CD14-positive monocyte (primary cell): ENCODE measurements at regions of chr5 and their contacts with region 1.

Region 1: DNA sequence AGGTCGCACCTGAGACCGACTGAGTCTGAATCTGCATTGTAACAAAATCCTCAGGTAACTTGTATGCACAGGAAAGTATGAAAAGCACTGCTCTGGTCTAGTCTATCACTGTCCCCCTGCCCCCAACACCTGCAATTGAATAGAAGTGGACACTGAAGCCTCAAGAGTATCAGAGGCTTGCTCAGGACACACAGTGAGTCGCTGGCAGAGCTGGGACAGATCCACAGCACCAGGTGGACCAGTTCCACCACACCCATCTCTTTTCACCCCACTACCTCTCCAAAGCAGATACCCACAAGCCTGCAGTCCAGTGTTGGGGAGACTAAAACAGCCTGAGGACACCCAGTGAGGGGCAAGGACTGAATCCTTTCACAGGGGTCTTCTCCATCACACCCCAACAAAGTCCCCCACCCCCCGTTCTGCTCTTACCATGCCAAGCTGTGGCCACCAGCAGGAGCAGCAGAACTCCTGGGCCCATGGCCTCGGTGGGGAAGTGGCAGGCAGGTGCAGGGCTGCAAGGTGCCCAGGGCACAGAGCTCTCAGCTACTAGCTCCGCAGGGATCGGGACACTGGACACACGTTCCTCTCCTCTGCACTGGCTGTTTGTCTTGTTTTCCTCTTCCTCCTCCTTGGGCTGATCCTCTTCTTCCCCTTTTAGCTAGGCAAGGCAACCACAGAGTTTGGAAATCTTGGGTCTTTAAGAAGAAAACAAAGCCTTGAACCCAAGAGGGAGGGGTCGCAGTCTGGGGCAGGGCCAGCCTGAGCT is at the start of gene CSF1R:
- DNase-seq: peak; percentile 47 to 73 (median 68)
- H3K4me3 ChIP-seq: peak within 1 kb of the TSS; percentile 61 to 87 (median 81)
- H3K4me3 Mint-ChIP-seq: peak within 1 kb of the TSS; percentile 96 to 98
- H3K27ac ChIP-seq: peak within 1 kb of the TSS; percentile 51 to 83
- H3K27ac Mint-ChIP-seq: peak within 1 kb of the TSS; percentile 86 to 95 (median 92)
- H3K4me1 ChIP-seq: peaks cover 63 to 76% of the 10 kb centered on the region in 2 donors
- H3K4me1 Mint-ChIP-seq: peaks cover 79% of the 10 kb centered on the region
- H3K27me3 ChIP-seq: no peaks in the 10 kb centered on the region
- H3K27me3 Mint-ChIP-seq: peaks cover 0 to 5% (median 0%) of the 10 kb centered on the region in 3 donors
- CTCF ChIP-seq: no peak
- polyA plus RNA-seq, gene CSF1R: 180 to 332 (median 242) TPM

Region 2: DNA sequence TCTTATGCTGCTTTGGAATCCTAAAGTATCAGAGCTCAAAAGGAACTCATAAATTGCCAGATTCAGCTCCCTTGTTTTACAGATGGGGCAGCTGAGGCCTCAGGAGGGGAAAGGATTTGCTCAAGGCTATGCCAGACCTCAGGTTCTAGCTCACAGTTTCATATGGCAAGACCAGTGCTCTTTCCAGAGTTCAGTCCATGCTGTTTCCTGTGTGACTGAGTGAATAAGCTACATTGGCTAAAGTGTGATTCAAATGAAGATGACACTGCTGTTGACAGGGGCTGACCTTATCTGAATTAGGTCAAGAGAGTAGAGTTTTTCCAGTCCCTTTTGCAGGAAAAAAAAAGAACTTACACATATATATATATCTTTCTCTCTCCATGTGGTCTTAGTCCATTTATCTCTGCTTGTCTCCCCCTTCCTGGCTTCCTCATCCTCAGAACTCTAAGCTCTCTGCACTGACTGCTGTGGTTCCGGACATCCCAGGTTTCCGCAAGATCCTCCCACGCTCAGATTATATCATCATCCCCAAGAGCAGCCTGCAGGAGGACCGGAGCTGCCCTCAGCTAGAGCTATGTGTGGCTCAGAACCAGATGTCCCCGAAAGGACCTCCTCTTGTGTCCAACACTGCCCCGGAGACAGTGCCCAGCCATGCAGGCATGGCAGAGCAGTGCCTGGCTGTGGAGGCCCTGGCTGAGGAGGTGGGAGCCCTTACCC is 76.3 kb before region 1 on chr5:
- intact Hi-C with region 1: no loop called
- DNase-seq: no peak
- H3K4me3 ChIP-seq: no peak overlapping the region
- H3K4me3 Mint-ChIP-seq: no peak overlapping the region
- H3K27ac ChIP-seq: no peak overlapping the region
- H3K27ac Mint-ChIP-seq: peak overlapping the region in 2 of 7 donors; percentile 33 to 37
- H3K4me1 ChIP-seq: no peaks in the 10 kb centered on the region
- H3K4me1 Mint-ChIP-seq: no peaks in the 10 kb centered on the region
- H3K27me3 ChIP-seq: no peaks in the 10 kb centered on the region
- H3K27me3 Mint-ChIP-seq: peaks cover 0 to 2% (median 0%) of the 10 kb centered on the region in 3 donors
- CTCF ChIP-seq: no peak

Region 3: DNA sequence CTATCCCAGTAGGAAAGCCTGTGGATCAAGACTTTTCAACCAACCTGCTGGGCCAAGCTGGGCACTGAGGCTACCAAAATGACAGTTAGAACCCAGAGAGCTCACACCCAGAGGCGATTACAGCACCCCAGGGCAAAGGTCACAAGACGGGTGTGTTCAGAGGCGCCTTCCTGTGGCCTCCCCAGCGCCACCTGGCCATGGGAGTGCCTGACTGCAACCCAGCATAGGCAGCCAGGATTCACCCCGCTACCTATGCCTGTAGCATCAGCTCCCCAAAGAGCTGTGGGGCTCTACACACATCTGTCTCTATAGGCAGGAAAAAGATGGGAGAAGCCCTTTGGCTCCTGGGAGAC is 36.0 kb after region 1 on chr5:
- intact Hi-C with region 1: loop called (anchors 5 kb)
- DNase-seq: peak; percentile 60 to 83 (median 75)
- H3K4me3 ChIP-seq: peak overlapping the region in 1 of 3 experiments; percentile 9
- H3K4me3 Mint-ChIP-seq: peak overlapping the region in 1 of 2 donors; percentile 68
- H3K27ac ChIP-seq: peak overlapping the region in 1 of 2 donors; percentile 86
- H3K27ac Mint-ChIP-seq: peak overlapping the region; percentile 82 to 95 (median 89)
- H3K4me1 ChIP-seq: peaks cover 40 to 44% of the 10 kb centered on the region in 2 donors
- H3K4me1 Mint-ChIP-seq: peaks cover 48% of the 10 kb centered on the region
- H3K27me3 ChIP-seq: no peaks in the 10 kb centered on the region
- H3K27me3 Mint-ChIP-seq: peaks cover 0 to 4% (median 2%) of the 10 kb centered on the region in 3 donors
- CTCF ChIP-seq: peak; percentile 74